K562 (cell line): ENCODE measurements at regions of chr22 and their contacts with region 1.

Region 1: DNA sequence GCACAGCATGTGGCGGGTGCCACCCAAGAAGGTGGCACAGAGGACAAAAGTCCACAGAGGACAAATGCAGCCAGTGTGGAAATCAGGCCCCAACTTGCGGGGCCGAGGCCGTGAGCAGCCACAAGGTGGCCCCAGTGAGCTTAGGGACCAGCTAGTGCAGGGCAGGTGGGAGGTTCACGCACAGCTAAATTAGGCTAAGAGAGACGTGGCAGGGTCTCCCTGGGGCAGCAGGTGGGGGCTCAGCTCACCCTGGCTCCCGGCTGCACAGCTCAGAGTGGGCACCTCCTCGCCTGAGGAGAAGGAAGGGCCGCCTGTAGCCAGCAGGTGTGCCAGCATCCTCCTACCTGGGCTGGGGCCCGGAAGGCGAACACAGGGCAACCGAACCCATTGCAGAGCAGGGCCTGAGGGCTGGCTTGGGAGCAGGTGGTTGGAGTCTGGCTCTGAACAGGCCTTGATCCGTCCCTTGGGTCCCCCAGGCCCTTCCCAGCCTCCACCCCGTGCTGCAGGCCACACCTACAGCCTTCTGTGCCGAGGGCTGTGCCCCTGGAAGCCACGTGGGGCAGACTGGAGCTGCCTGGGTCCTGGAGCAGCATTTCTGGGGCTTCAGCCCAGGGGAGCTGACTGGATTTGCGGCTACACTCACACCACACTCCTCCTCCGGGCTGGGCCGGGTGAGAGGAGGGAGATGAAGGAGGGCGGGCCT is 26.1 kb upstream of the CELSR1 start:
- DNase-seq: peak; percentile 78 to 81 (median 80)
- ATAC-seq: peak; percentile 99
- H3K4me3 ChIP-seq: no peak overlapping the region
- H3K27ac ChIP-seq: no peak overlapping the region; the same call in 1 of the 3 replicates
- H3K4me1 ChIP-seq: peaks cover 8 to 15% of the 10 kb centered on the region in 2 experiments; a peak in 4 of 5 replicates
- H3K27me3 ChIP-seq: no peaks in the 10 kb centered on the region
- CTCF ChIP-seq: peak; percentile 72 to 83 (median 77)
- EP300 ChIP-seq: no peak
- POLR2A ChIP-seq: no peak
- RAD21 ChIP-seq: peak; percentile 56 to 81

Region 2: DNA sequence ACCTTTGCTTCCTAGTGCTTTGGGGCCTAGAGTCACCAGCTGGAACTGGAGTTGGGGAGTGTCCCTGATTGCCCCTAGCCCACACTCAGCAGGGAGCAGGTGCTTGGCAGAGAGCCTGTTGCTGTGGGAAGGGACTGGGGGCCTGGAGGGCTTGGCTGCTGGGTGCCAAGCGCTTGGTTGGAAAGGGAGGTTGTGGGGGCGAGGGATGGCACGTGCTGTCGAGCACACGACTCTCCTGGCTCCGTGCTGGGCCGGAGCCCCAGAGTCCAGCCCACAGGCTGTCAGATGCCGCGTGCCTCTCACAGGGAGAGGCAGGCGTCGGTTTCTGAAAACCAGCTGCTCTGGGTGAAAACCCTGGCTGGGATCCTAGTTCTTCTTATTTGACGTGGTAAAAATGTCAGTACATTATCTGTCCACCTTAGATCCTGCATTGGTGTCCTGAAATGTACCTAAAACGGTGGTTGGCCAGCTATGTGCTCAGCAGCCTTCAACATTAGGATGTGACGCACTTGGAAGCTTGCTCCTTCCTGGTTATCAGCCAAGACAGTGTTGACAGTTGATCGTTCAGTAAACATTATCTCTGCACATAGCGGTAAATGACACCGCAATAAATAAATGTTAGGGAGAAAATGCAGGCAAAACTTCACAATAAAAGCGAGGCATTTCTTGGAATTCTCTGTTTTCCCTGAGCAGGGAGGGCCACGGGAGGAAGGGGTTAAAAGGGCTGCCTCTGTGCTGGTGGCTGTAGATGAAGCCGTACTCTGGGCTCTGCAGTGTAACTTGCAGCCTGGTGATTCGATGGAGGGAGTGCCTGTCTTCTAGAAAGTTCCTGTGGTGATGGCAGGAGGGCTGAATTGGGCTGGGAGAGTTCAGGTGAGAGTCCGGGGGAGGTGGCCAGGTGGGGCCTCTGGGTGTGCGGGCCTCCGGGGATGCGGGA is 85.9 kb after region 1 on chr22:
- CTCF ChIA-PET with region 1: interaction called, 3 read pairs
- POLR2A ChIA-PET with region 1: interaction called, 3 read pairs
- in situ Hi-C with region 1: loop called (anchors 10 kb)
- intact Hi-C with region 1: no loop called
- DNase-seq: peak; percentile 31 to 69 (median 58)
- ATAC-seq: peak; percentile 80
- H3K4me3 ChIP-seq: no peak overlapping the region
- H3K27ac ChIP-seq: peak overlapping the region; percentile 75
- H3K4me1 ChIP-seq: peaks cover 41 to 56% of the 10 kb centered on the region in 2 experiments
- H3K27me3 ChIP-seq: no peaks in the 10 kb centered on the region
- CTCF ChIP-seq: no peak
- EP300 ChIP-seq: peak; percentile 71; the same call in 1 of the 2 replicates
- POLR2A ChIP-seq: no peak
- RAD21 ChIP-seq: no peak

Region 3: GRCh38 chr22:46674367-46674781 is 110.8 kb after region 1 on chr22:
- CTCF ChIA-PET with region 1: no interaction called
- POLR2A ChIA-PET with region 1: no interaction called
- in situ Hi-C with region 1: loop called (anchors 10 kb)
- intact Hi-C with region 1: no loop called
- DNase-seq: no peak
- ATAC-seq: no peak
- H3K4me3 ChIP-seq: no peak overlapping the region
- H3K27ac ChIP-seq: no peak overlapping the region
- H3K4me1 ChIP-seq: peaks cover 0 to 18% of the 10 kb centered on the region in 2 experiments; a peak in 2 of 5 replicates
- H3K27me3 ChIP-seq: no peaks in the 10 kb centered on the region
- CTCF ChIP-seq: no peak
- EP300 ChIP-seq: no peak
- POLR2A ChIP-seq: no peak
- RAD21 ChIP-seq: no peak

Region 4: GRCh38 chr22:46681010-46681409 is 117.5 kb after region 1 on chr22:
- CTCF ChIA-PET with region 1: no interaction called
- POLR2A ChIA-PET with region 1: interaction called, 3 read pairs
- in situ Hi-C with region 1: loop called (anchors 10 kb)
- intact Hi-C with region 1: loop called (anchors 10 kb)
- DNase-seq: peak; percentile 37 to 49 (median 44)
- ATAC-seq: peak; percentile 91
- H3K4me3 ChIP-seq: no peak overlapping the region
- H3K27ac ChIP-seq: no peak overlapping the region
- H3K4me1 ChIP-seq: peaks cover 0 to 8% of the 10 kb centered on the region in 2 experiments; a peak in 2 of 5 replicates
- H3K27me3 ChIP-seq: no peaks in the 10 kb centered on the region
- CTCF ChIP-seq: peak; percentile 54 to 55 (median 54)
- EP300 ChIP-seq: no peak
- POLR2A ChIP-seq: no peak
- RAD21 ChIP-seq: no peak; a peak in 1 of 4 replicates